Common myeloid progenitor, CD34-positive (primary cell): ENCODE measurements at regions of chr2 and their contacts with region 1.

Region 1: GRCh38 chr2:54522624-54523281 is 66.6 kb downstream of the SPTBN1 start:
- DNase-seq: peak; percentile 76 to 85 (median 84)
- H3K4me3 ChIP-seq: no peak overlapping the region
- H3K27ac ChIP-seq: no peak overlapping the region
- H3K4me1 ChIP-seq: peaks cover 0 to 15% (median 3%) of the 10 kb centered on the region in 4 experiments
- H3K27me3 ChIP-seq: no peaks in the 10 kb centered on the region

Region 2: DNA sequence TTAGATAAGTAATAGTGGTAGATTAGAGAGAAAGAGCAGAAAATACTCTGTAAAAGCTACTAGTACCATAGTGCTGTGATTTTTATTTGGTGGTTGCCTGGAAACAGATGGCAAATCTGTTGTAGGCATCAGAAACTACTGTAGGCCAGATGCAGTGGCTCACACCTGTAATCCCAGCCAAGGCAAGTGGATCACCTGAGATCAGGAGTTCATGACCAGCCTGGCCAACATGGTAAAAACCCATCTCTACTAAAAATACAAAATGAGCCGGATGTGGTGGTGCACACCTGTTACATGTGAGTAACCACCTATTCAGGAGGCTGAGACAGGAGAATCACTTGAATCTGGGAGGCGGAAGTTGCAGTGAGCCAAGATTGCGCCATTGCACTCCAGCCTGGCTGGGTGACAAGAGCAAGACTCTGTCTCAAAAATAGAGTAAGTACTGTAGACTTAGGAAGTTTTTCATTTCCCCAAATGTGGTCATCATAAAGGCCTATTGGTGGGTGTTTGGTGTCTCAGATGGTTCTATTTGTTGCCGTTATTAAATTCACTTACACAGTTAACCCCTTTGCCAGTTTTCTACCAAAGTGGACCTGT is 12.9 kb after region 1 on chr2:
- CTCF ChIA-PET with region 1: interaction called, 10 read pairs
- POLR2A ChIA-PET with region 1: interaction called, 7 read pairs
- DNase-seq: no peak
- H3K4me3 ChIP-seq: no peak overlapping the region
- H3K27ac ChIP-seq: no peak overlapping the region
- H3K4me1 ChIP-seq: peaks cover 0 to 2% (median under 1%) of the 10 kb centered on the region in 4 experiments
- H3K27me3 ChIP-seq: no peaks in the 10 kb centered on the region

Region 3: GRCh38 chr2:54589340-54590215 is 66.8 kb after region 1 on chr2:
- CTCF ChIA-PET with region 1: interaction called, 16 read pairs
- POLR2A ChIA-PET with region 1: no interaction called
- DNase-seq: peak; percentile 97 to 99 (median 98)
- H3K4me3 ChIP-seq: peak overlapping the region in 6 of 7 experiments; percentile 4 to 67 (median 49)
- H3K27ac ChIP-seq: peak overlapping the region; percentile 87 to 95
- H3K4me1 ChIP-seq: peaks cover 71 to 96% (median 83%) of the 10 kb centered on the region in 4 experiments
- H3K27me3 ChIP-seq: no peaks in the 10 kb centered on the region

Region 4: GRCh38 chr2:54624591-54625071 is 101.9 kb after region 1 on chr2:
- CTCF ChIA-PET with region 1: interaction called, 14 read pairs
- POLR2A ChIA-PET with region 1: interaction called, 3 read pairs
- DNase-seq: no peak
- H3K4me3 ChIP-seq: no peak overlapping the region
- H3K27ac ChIP-seq: no peak overlapping the region
- H3K4me1 ChIP-seq: no peaks in the 10 kb centered on the region
- H3K27me3 ChIP-seq: no peaks in the 10 kb centered on the region

Region 5: GRCh38 chr2:54665436-54665856 is 142.7 kb after region 1 on chr2:
- CTCF ChIA-PET with region 1: interaction called, 14 read pairs
- POLR2A ChIA-PET with region 1: no interaction called
- DNase-seq: peak; percentile 71 to 84 (median 73)
- H3K4me3 ChIP-seq: no peak overlapping the region
- H3K27ac ChIP-seq: no peak overlapping the region
- H3K4me1 ChIP-seq: peaks cover 0 to 15% (median 9%) of the 10 kb centered on the region in 4 experiments
- H3K27me3 ChIP-seq: no peaks in the 10 kb centered on the region